ENCODE measurements at regions of chr12 and their contacts with region 1.

Region 1: DNA sequence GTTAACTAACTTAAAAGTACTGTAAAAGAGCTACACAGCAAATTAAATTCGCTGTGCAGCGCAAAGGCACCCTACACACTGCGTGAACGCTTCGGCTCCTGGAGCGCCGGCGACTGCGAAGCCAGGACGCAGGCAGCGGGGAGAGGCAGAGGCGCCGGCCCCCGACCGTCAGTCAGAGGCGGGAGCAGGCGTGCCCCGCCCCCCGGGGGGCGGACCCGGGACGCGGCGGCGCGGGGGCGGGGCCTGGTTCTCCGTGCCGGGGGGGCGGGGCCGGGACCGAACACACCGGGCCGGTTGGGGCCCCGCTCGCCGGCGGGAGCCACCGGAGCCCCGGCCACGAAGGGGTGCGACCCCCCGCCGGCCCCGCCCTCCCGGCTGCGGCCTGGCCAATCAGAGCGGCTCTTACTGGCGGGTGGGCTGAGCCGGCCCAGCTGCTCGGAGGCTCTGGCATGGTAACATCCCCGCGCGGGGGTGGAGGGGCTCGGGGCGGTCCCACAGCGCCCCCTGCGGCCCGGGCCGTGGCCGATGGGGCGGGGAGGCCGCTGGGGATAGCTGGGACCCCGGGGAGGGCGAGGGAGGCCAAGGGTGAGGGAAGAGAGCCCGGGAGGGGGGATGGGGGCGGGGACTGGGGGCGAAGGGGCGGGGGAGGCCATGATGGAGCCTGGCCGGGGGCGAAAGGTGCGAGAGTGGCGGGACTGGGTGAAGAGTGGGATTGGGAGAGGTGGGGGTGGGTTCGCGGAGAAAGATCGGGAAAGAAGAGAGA is at the start of gene PRPF40B:
- DNase-seq: peak; percentile 90 to 93 (median 91)
- ATAC-seq: peak; percentile 86 to 91 (median 90)
- H3K4me3 ChIP-seq: peak within 1 kb of the TSS; percentile 38 to 75 (median 64)
- H3K27ac ChIP-seq: peak within 1 kb of the TSS; percentile 43 to 94 (median 84)
- H3K4me1 ChIP-seq: peaks cover 0 to 25% (median 16%) of the 10 kb centered on the region in 12 donors
- H3K27me3 ChIP-seq: peaks cover 0 to 7% (median 0%) of the 10 kb centered on the region in 9 donors
- CTCF ChIP-seq: peak; percentile 22 to 65 (median 44)
- POLR2A ChIP-seq: peak; percentile 63 to 93
- total RNA-seq, gene PRPF40B: 12.7 to 25.5 (median 20.9) TPM

Region 2: DNA sequence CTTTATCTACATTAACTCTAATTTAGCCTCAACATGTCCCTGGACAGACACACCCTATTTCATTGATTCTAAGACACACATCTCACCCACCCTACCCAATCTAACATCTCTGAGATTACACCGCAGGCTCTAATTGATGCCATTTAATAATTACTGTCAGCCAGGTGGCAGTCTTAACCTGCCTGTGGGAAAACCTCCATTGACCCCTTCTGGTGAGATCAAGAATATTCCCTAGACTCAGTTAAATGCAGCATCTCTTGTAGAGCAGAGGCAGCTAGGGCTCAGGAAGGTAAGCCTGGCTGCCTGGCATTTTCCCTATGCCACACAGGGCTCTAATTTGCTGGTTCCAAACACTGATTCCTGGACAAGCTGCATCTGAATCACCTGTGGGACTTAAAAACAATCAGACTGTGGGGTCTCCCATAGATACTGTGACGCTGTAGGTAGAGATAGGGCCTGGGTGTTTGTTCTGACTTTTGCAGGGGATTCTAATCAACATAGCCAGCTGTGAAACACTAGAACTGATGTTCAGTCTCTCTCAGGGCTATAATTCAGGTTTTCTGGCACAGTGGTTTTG is 69.7 kb before region 1 on chr12:
- intact Hi-C with region 1: loop called in 1 of 10 experiments (anchors 2 kb)
- DNase-seq: peak in 1 of 5 donors; percentile 3
- ATAC-seq: peak in 1 of 4 donors; percentile 10
- H3K4me3 ChIP-seq: no peak overlapping the region
- H3K27ac ChIP-seq: no peak overlapping the region
- H3K4me1 ChIP-seq: peaks cover 0 to 26% (median 15%) of the 10 kb centered on the region in 12 donors
- H3K27me3 ChIP-seq: peaks cover 0 to 13% (median 0%) of the 10 kb centered on the region in 9 donors
- CTCF ChIP-seq: peak in 9 of 12 donors; percentile 4 to 49 (median 30)
- POLR2A ChIP-seq: no peak

Region 3: GRCh38 chr12:49567611-49568441 is 55.5 kb before region 1 on chr12 and contains the start of gene MCRS1:
- intact Hi-C with region 1: loop called in 1 of 10 experiments (anchors 1 kb)
- DNase-seq: peak; percentile 88 to 92 (median 90)
- ATAC-seq: peak; percentile 65 to 89 (median 79)
- H3K4me3 ChIP-seq: peak within 1 kb of the TSS; percentile 50 to 99 (median 82)
- H3K27ac ChIP-seq: peak within 1 kb of the TSS; percentile 61 to 98 (median 94)
- H3K4me1 ChIP-seq: peaks cover 0 to 62% (median 43%) of the 10 kb centered on the region in 12 donors
- H3K27me3 ChIP-seq: no peaks in the 10 kb centered on the region
- CTCF ChIP-seq: no peak
- POLR2A ChIP-seq: peak in 1 of 2 donors; percentile 65
- total RNA-seq, gene MCRS1: 70.0 to 122 (median 88.3) TPM